ENCODE measurements at regions of chr5 and their contacts with region 1.

Region 1: GRCh38 chr5:82107267-82107666 is 135.4 kb downstream of the ATG10 start:
- DNase-seq: peak; percentile 36
- H3K4me3 Mint-ChIP-seq: no peak overlapping the region
- H3K27ac Mint-ChIP-seq: peak overlapping the region; percentile 50
- H3K4me1 Mint-ChIP-seq: peaks cover 27% of the 10 kb centered on the region
- H3K27me3 Mint-ChIP-seq: no peaks in the 10 kb centered on the region
- CTCF ChIP-seq: peak; percentile 56

Region 2: GRCh38 chr5:81425569-81425968 is 681.7 kb before region 1 on chr5:
- CTCF ChIA-PET with region 1: interaction called, 3 read pairs
- POLR2A ChIA-PET with region 1: interaction called, 3 read pairs
- intact Hi-C with region 1: loop called (anchors 5 kb)
- DNase-seq: peak; percentile 49
- H3K4me3 Mint-ChIP-seq: no peak overlapping the region
- H3K27ac Mint-ChIP-seq: peak overlapping the region; percentile 16
- H3K4me1 Mint-ChIP-seq: peaks cover 16% of the 10 kb centered on the region
- H3K27me3 Mint-ChIP-seq: no peaks in the 10 kb centered on the region
- CTCF ChIP-seq: peak; percentile 51

Region 3: GRCh38 chr5:81851481-81852178 is 255.6 kb before region 1 on chr5:
- CTCF ChIA-PET with region 1: interaction called, 22 read pairs
- POLR2A ChIA-PET with region 1: interaction called, 40 read pairs
- intact Hi-C with region 1: loop called (anchors 1 kb)
- DNase-seq: peak; percentile 91
- H3K4me3 Mint-ChIP-seq: peak overlapping the region; percentile 83
- H3K27ac Mint-ChIP-seq: peak overlapping the region; percentile 84
- H3K4me1 Mint-ChIP-seq: peaks cover 33% of the 10 kb centered on the region
- H3K27me3 Mint-ChIP-seq: no peaks in the 10 kb centered on the region
- CTCF ChIP-seq: no peak

Region 4: DNA sequence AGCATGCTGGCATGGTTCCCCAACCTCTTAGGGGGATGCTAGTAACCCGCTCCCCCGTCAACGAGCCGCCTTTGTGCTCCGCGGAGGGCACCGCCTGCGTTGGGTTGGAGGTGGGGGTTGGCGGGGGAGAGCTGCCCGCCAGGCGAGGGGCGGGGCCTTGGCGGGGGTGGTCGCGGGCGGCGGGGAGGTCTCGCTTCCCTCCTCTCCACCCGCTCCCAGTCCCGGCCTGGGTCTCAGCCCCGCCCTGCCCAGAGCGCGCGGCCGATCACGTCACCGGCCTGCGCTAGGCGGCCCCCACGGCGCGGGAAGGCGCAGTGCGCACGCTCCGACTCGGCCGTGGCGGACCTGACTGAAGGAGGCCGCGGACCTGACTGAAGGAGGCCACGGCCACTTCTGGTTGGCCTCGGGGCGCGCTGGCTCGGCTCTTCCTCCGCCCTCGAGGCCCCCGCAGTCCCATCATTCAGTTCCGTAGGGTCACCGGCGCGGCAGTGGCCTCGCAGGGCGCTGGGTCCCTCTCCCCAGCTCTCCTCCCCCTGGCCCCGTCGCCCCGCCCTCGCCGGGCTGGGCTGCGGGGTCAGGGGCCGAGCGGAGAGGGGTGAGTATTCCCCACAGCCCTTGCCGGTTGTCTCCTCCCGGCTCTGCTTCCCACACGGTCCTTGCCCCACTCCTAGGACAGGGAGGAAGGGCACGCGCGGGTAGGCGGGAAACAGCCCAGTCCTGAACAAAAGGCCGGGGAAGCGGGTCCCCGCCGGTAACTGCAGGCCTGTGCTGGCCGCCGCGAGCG is 135.4 kb before region 1 on chr5 and contains the start of gene ATG10:
- CTCF ChIA-PET with region 1: interaction called, 7 read pairs
- POLR2A ChIA-PET with region 1: interaction called, 14 read pairs
- intact Hi-C with region 1: no loop called
- DNase-seq: peak; percentile 86
- H3K4me3 Mint-ChIP-seq: peak within 1 kb of the TSS; percentile 95
- H3K27ac Mint-ChIP-seq: peak within 1 kb of the TSS; percentile 96
- H3K4me1 Mint-ChIP-seq: peaks cover 19% of the 10 kb centered on the region
- H3K27me3 Mint-ChIP-seq: no peaks in the 10 kb centered on the region
- CTCF ChIP-seq: no peak
- total RNA-seq, gene ATG10: 9.9 and 11.1 TPM in 2 replicates

Region 5: DNA sequence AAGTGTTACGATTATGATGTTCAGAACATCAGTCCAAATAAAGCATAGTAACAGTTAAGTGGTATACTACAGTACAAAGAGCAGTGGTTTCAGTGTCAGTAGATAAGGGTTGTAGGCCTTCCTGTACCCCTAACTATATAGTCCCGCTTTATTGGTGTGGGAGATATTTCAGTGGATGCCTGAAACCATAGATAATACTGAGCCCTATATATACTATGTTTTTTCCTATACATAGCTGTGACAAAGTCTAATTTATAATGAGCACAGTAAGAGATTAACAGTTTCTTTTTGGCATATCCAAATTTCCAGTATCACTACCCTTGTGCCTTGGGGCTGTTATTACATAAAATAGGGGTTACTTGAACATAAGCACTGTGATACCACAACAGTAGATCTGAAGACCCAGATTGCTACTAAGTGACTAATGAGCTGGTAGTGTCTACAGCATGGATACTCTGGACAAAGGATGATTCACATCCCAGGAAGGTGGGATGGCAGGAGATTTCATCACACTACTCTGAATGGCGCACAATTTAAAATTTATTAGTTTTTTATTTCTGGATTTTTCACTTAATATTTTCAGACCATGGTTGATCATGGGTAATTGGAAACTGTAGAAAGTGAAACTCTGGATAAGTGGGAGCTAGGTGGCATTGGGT is 51.6 kb after region 1 on chr5:
- CTCF ChIA-PET with region 1: interaction called, 99 read pairs
- POLR2A ChIA-PET with region 1: interaction called, 94 read pairs
- intact Hi-C with region 1: no loop called
- DNase-seq: peak; percentile 86
- H3K4me3 Mint-ChIP-seq: no peak overlapping the region
- H3K27ac Mint-ChIP-seq: peak overlapping the region; percentile 70
- H3K4me1 Mint-ChIP-seq: peaks cover 21% of the 10 kb centered on the region
- H3K27me3 Mint-ChIP-seq: no peaks in the 10 kb centered on the region
- CTCF ChIP-seq: no peak